ENCODE measurements at regions of chr15 and their contacts with region 1.

Region 1: GRCh38 chr15:60520825-60521368 is 42.0 kb upstream of the ICE2 start:
- DNase-seq: peak; percentile 63
- H3K4me3 Mint-ChIP-seq: no peak overlapping the region
- H3K27ac Mint-ChIP-seq: peak overlapping the region; percentile 71
- H3K4me1 Mint-ChIP-seq: peaks cover 58% of the 10 kb centered on the region
- H3K27me3 Mint-ChIP-seq: no peaks in the 10 kb centered on the region

Region 2: DNA sequence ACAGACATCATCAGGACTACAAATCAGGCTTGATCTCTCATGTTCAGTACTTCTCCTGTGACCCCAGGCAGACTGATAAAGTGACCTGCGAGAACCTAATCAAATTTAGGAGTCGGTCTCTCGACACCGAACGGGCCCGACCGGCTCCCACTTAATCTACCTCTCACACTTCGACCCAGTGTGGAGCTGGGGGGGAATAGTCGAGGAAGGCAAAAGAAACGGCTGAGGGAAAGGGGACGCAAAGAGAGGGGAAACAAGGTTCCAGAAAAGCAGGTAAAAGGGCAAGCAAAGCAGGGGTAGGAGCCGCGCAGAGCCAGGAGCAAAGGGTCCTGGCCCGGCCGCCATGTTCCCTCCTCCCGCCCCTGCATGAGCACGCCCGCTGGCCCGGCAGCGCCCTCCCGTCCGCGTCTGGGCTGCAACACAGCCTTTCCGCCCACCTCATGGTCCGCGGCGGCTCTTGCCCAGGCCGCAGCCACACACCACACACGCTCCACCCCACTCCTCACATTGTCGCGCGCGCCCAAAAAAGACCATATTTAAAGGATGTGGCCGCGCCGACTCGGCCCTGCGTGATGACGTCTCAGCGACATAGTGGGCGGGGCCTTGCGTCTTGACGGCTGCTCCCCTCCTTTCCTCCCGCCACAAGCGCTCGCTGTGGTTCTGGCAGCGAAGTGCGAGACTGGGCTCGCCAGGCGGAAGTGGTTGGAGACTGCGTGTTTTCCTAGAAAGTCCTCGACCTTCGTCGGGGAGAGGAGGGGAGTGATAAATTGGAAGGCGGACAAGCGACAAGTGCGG is 42.1 kb before region 1 on chr15 and contains the start of gene ICE2:
- intact Hi-C with region 1: loop called (anchors 1 kb)
- DNase-seq: peak; percentile 95
- H3K4me3 Mint-ChIP-seq: peak within 1 kb of the TSS; percentile 97
- H3K27ac Mint-ChIP-seq: peak within 1 kb of the TSS; percentile 97
- H3K4me1 Mint-ChIP-seq: peaks cover 52% of the 10 kb centered on the region
- H3K27me3 Mint-ChIP-seq: no peaks in the 10 kb centered on the region
- total RNA-seq, gene ICE2: 51.9 and 56.1 TPM in 2 replicates

Region 3: GRCh38 chr15:60540002-60540651 is 19.2 kb after region 1 on chr15:
- intact Hi-C with region 1: loop called (anchors 1 kb)
- DNase-seq: no peak
- H3K4me3 Mint-ChIP-seq: peak overlapping the region; percentile 28
- H3K27ac Mint-ChIP-seq: peak overlapping the region; percentile 91
- H3K4me1 Mint-ChIP-seq: peaks cover 86% of the 10 kb centered on the region
- H3K27me3 Mint-ChIP-seq: no peaks in the 10 kb centered on the region

Region 4: DNA sequence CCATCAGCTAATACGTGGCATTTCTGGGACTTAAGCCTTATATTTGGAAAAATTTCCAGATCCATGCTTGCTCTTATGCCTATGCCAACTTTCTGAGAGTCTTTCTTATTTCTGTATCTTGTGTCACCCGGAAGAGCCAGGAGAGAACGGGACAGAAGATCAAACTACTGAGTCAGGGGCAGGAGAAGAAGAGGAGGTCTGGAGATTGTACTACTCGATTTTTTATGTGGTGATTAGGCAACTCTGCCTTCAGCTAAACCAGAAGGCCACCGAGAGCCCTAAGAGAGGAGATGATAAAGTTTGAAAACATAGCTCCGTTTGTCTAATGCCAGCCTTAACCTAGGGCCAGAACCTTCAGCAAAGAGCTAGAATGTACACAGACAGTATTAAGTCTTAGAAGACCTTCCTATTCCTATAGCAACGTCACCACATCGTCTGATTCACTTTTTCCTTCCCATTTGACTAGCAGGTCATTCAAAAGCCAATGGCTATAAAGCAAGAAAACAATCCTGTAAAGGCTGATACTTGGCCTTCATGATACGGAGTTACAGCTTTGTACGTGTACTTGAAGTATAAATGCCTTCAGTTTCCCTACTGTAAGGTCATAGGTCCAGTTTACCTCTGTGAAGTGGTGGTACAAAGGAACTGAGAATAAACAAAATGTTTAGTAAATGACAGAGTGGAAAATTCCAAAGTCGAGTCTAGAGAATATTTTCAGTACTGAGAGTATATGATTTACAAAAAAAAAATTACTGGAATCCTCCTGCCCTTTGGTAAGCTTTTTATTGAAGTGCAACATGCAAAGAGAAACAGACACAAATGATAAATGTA is 54.1 kb after region 1 on chr15:
- intact Hi-C with region 1: loop called (anchors 1 kb)
- DNase-seq: no peak
- H3K4me3 Mint-ChIP-seq: peak overlapping the region; percentile 79
- H3K27ac Mint-ChIP-seq: peak overlapping the region; percentile 99
- H3K4me1 Mint-ChIP-seq: peaks cover 80% of the 10 kb centered on the region
- H3K27me3 Mint-ChIP-seq: no peaks in the 10 kb centered on the region

Region 5: GRCh38 chr15:60648928-60649679 is 128.2 kb after region 1 on chr15:
- intact Hi-C with region 1: no loop called
- DNase-seq: no peak
- H3K4me3 Mint-ChIP-seq: peak overlapping the region; percentile 70
- H3K27ac Mint-ChIP-seq: peak overlapping the region; percentile 89
- H3K4me1 Mint-ChIP-seq: peaks cover 74% of the 10 kb centered on the region
- H3K27me3 Mint-ChIP-seq: peaks cover 4% of the 10 kb centered on the region